BJ (cell line): ENCODE measurements at regions of chr12 and their contacts with region 1.

Region 1: GRCh38 chr12:57621497-57622292 is 10.5 kb downstream of the ARHGEF25 start:
- DNase-seq: no peak
- H3K4me3 ChIP-seq: peak overlapping the region; percentile 35
- H3K27me3 ChIP-seq: peaks cover 31% of the 10 kb centered on the region
- CTCF ChIP-seq: peak; percentile 95

Region 2: DNA sequence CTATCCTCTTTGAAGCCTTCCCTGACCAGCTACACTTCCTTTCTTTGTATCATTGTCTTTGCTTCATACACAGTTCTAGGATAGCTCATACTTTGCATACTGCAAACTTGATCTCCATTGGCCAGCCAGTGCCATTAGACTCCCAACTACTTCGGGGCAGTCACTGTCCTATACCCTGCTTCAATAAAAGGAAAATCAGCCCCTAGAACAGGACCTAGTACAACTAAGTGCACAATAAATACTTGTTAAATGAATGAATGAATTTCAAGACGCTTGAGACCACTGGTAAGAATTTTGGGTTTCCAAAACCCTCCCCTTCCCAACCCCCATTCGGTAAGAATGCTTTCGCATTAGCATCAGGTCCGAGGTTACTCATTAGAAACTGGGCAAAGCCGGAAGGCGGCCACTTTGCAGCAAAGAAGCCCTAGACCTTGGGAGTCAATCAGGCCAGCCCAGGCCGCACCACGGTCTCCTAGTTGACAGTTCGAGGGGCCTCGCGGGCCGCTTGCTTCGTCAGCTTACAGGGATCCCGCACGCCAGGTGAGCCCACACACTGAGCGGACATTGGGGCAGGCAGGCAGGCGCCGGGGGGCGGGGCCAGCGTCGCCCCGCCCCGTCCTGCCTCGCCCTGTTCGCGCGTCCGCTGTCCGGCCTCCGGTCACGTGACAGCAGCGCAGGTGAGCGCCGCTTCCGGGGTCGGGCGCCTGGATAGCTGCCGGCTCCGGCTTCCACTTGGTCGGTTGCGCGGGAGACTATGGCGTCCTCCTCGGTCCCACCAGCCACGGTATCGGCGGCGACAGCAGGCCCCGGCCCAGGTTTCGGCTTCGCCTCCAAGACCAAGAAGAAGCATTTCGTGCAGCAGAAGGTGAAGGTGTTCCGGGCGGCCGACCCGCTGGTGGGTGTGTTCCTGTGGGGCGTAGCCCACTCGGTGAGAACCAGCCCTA is 30.9 kb before region 1 on chr12 and contains the start of gene PIP4K2C:
- CTCF ChIA-PET with region 1: interaction called, 257 read pairs
- POLR2A ChIA-PET with region 1: no interaction called
- DNase-seq: no peak
- H3K4me3 ChIP-seq: peak within 1 kb of the TSS; percentile 94
- H3K27me3 ChIP-seq: no peaks in the 10 kb centered on the region; the same call in 1 of the 2 replicates
- CTCF ChIP-seq: no peak
- polyA plus RNA-seq, gene PIP4K2C: 24.3 and 30.1 TPM in 2 replicates

Region 3: GRCh38 chr12:57611108-57611809 is 10.4 kb before region 1 on chr12 and contains the start of gene ARHGEF25:
- CTCF ChIA-PET with region 1: interaction called, 29 read pairs
- POLR2A ChIA-PET with region 1: no interaction called
- DNase-seq: no peak
- H3K4me3 ChIP-seq: peak within 1 kb of the TSS; percentile 82
- H3K27me3 ChIP-seq: no peaks in the 10 kb centered on the region
- CTCF ChIP-seq: no peak
- polyA plus RNA-seq, gene ARHGEF25: 18.0 and 26.0 TPM in 2 replicates

Region 4: GRCh38 chr12:57632694-57633477 is 11.2 kb after region 1 on chr12 and contains the start of gene B4GALNT1:
- CTCF ChIA-PET with region 1: interaction called, 14 read pairs
- POLR2A ChIA-PET with region 1: no interaction called
- DNase-seq: no peak
- H3K4me3 ChIP-seq: peak within 1 kb of the TSS; percentile 49
- H3K27me3 ChIP-seq: peaks cover 16% of the 10 kb centered on the region
- CTCF ChIP-seq: peak; percentile 87
- polyA plus RNA-seq, gene B4GALNT1: 1.2 and 2.7 TPM in 2 replicates

Region 5: DNA sequence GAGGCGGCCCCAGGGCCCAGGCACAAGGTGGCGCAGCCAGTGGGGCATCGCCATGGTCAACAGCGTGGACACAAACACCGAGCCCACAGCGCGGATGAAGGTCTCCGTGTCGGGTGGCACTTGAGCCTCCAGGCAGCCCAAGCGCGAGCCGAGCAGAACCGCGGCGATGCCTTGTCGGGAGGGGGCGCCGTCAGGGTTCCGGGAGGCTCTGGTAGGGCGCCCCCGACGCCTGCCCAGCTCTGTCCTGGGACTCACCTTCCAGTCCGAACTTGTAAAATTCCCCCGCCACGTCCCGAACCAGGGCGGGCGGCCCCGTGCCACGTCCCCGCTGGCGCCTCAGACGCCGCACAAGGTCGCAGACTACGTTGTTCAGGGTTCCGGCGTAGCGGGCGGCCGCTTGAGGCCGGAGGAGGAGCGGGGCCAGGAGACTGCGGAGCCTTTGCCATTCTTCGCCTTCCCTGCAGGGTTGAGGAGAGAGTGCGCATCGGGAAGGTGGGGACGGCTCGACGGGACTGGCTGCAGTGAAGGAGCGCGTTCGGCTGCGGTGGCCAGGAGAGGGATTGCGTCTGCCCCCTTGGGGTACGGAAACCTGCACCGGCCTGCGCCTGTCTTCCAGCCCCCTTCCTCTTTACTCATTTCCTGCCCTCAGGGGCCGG is 143.5 kb after region 1 on chr12:
- CTCF ChIA-PET with region 1: no interaction called
- POLR2A ChIA-PET with region 1: no interaction called
- DNase-seq: no peak
- H3K4me3 ChIP-seq: peak overlapping the region; percentile 33
- H3K27me3 ChIP-seq: peaks cover 8% of the 10 kb centered on the region; the same call in 1 of the 2 replicates
- CTCF ChIP-seq: peak; percentile 50